Activated CD4-positive, alpha-beta T cell treated with anti-CD3 and anti-CD28 coated beads, Interleukin-2, amount 10 ng/mL, durations not matched to agents 24 days and 14 days (primary cell): ENCODE measurements at regions of chr14 and their contacts with region 1.

Region 1: GRCh38 chr14:94392510-94392935 is 4.1 kb upstream of the SERPINA1 start:
- DNase-seq: peak; percentile 85
- H3K4me3 Mint-ChIP-seq: no peak overlapping the region
- H3K27ac Mint-ChIP-seq: peak overlapping the region; percentile 61
- H3K4me1 Mint-ChIP-seq: peaks cover 42% of the 10 kb centered on the region
- H3K27me3 Mint-ChIP-seq: no peaks in the 10 kb centered on the region

Region 2: GRCh38 chr14:93970549-93970946 is 422.0 kb before region 1 on chr14:
- intact Hi-C with region 1: loop called (anchors 10 kb)
- DNase-seq: peak; percentile 85
- H3K4me3 Mint-ChIP-seq: peak overlapping the region; percentile 83
- H3K27ac Mint-ChIP-seq: peak overlapping the region; percentile 98
- H3K4me1 Mint-ChIP-seq: peaks cover 70% of the 10 kb centered on the region
- H3K27me3 Mint-ChIP-seq: no peaks in the 10 kb centered on the region

Region 3: DNA sequence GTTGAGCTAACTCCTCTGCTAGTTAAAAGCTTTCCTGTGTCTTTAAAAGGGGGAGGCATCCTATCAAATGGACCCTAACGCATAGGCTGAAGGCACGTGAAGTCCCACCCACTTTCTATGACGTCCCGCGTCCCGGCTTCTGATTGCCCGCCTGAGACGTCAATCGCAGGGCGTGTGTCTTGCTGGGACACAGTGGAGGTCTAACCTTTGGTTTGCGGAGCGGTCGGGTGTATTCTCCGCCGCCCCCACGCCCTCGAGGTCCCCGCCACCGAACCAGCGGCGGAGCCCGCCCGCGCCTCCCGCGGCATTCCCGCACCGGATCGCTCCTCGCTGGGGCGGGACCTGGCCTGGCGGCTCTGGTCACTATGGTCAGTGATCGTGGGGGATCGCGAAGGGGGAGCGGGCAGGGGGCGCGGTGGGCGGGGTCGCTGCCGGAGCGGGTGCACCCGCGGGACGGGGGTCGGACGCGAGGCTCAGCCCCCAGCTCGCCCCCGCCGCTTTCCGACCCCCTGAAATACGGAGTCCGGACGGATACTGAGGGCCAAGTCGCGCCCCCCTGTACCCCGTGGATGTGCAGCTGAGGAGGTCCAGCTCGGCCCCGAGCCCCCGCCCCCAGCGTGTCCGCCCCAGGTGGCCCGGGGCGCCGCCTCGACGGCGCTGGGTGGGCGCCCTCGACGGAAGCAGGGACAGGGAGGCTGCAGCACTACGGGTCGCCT is 366.2 kb before region 1 on chr14 and contains the start of gene OTUB2:
- intact Hi-C with region 1: loop called (anchors 10 kb)
- DNase-seq: peak; percentile 99
- H3K4me3 Mint-ChIP-seq: peak within 1 kb of the TSS; percentile 75
- H3K27ac Mint-ChIP-seq: peak within 1 kb of the TSS; percentile 52
- H3K4me1 Mint-ChIP-seq: peaks cover 41% of the 10 kb centered on the region
- H3K27me3 Mint-ChIP-seq: no peaks in the 10 kb centered on the region
- total RNA-seq, gene OTUB2: 1.3 and 1.7 TPM in 2 replicates

Region 4: DNA sequence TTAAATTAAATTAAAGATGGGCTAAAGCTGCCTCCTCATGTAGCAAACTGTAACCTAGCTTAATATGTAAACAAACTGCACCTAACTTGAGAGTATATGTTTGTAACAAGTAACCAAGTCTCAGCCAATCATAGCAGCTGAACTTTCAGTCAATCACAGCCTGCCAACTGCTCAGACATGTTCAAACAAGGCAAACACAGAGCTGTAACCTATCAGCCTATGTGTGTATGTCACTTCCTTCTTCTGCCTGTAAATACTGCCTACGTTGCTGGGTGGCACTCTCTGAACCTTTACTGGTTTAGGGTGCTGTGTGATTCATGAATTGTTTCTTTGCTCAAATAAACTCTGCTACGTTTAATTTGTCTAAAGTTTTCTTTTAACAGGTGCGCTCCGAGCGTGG is 72.3 kb before region 1 on chr14:
- intact Hi-C with region 1: no loop called
- DNase-seq: peak; percentile 47
- H3K4me3 Mint-ChIP-seq: no peak overlapping the region
- H3K27ac Mint-ChIP-seq: no peak overlapping the region
- H3K4me1 Mint-ChIP-seq: no peaks in the 10 kb centered on the region
- H3K27me3 Mint-ChIP-seq: peaks cover 8% of the 10 kb centered on the region

Region 5: DNA sequence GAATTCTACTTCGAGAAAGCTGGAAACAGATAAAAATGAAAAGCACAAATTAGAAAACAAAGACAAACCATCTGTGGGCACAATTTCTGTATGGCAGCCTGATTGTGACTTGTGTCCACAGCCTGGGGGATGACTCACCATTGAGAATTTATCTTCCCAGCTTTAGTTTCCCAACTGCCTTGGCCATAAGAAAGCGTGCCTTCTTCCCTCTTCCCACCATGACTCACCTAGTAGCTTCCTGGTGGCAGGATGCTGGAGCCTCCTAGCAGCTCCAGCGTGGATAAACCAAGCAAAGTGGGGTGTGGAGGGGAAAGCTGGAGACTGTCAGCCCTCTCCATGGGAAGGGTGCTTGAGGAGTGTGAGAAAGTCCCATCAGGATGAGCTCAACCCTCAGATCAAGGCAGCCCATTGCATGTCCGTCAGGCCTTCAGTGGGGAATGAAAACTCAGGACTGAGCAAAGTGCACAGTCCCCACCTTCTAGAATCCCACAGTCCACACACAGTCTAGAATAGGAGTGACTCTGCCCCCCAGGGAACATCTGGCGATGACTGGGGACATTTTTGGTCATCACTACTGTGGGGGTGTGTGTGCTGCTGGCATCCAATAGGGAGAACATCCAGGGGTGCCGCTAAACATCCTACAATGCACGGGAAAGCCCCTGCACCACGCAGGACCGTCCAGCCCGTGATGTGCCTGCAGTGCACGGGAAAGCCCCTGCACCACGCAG is 47.0 kb before region 1 on chr14:
- intact Hi-C with region 1: loop called (anchors 5 kb)
- DNase-seq: no peak
- H3K4me3 Mint-ChIP-seq: no peak overlapping the region
- H3K27ac Mint-ChIP-seq: no peak overlapping the region
- H3K4me1 Mint-ChIP-seq: peaks cover 12% of the 10 kb centered on the region
- H3K27me3 Mint-ChIP-seq: peaks cover 2% of the 10 kb centered on the region